HepG2 (cell line): ENCODE measurements at regions of chr5 and their contacts with region 1.

Region 1: DNA sequence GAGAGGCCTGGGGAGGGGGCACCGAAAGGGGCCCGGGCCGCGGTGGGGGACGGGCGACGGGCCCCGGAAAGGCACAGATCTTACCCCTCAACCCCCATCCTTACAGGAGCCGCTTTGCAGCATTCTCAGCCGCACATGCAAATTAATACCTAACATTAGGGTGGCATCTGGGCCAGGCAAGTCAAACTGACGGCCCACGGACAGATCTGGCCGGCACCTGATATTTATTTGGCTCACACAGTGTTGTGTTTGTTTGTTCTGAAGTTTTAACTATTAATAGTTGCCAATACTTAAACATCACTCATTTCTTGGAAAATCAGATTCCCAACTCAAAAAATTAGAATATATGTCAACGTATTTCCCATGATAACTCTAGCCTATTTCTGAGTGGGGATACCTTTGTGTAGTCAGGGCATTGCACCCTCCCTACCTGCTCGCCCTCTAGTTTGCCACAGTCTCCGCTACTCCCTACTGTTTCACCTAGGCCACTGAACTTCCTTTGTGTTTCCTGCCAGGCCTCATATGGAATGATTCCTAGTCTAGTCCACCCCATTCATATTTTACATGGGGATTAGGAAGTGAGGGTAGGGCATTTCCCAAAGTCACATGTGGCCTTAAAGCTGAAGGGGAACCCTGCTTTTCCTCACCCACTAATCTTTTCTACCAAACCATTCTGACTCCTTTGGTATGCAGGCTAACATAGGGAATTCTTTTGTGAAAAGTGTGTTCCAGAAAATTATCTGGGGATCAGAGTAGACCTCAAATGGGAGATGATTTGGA is 71.9 kb upstream of the LARP1 start:
- DNase-seq: no peak
- ATAC-seq: peak; percentile 34; the same call in 2 of the 3 replicates
- H3K4me3 ChIP-seq: peak overlapping the region; percentile 59 to 67 (median 66)
- H3K27ac ChIP-seq: peak overlapping the region; percentile 74
- H3K4me1 ChIP-seq: peaks cover 55% of the 10 kb centered on the region
- H3K27me3 ChIP-seq: no peaks in the 10 kb centered on the region
- CTCF ChIP-seq: no peak
- EP300 ChIP-seq: no peak
- POLR2A ChIP-seq: no peak
- RAD21 ChIP-seq: no peak

Region 2: DNA sequence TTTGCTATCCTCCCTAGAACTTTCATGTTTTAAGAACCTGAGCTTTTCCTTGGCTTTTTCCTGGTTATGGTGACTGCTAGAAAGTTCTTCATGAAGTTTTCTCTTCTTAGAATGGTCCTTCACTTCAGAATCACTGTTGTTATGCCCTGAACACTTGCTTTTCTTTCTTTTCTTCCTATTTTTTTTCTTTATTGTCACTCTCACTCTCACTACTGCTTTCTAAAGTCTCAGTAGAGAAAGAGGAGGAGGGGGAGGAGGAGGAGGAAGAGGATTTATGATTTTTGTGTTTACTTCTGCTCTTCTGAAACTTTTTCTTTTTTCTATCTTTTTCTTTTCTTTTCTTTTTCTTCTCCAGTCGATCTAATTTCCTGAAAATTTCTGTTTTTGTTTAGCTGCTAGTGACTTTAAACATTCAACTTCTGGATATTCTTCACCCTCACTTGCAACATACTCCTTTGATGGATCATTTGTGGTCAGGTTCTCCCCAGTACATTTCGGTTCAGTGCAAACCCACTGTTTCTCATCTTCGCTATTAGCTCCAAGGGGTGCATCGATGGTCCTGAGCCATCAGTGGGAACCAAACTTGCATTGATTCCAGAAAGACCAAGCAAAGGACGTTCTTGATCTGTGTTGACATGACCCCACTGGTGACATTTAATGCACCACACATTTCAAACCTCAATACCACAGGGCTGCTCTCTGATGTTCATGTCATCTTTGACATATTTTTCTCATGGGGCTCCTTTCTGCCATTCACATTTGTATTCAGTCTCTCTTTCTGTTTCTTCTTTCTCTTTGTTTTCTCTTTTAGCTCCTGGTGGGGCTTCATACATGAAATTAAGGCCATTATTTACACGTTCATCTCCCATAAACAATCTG is 123.7 kb before region 1 on chr5:
- CTCF ChIA-PET with region 1: no interaction called
- POLR2A ChIA-PET with region 1: no interaction called
- in situ Hi-C with region 1: no loop called
- intact Hi-C with region 1: no loop called
- DNase-seq: no peak
- ATAC-seq: no peak
- H3K4me3 ChIP-seq: no peak overlapping the region
- H3K27ac ChIP-seq: no peak overlapping the region
- H3K4me1 ChIP-seq: no peaks in the 10 kb centered on the region
- H3K27me3 ChIP-seq: peaks cover 0 to 3% of the 10 kb centered on the region in 2 experiments; a peak in 1 of 5 replicates
- CTCF ChIP-seq: no peak
- EP300 ChIP-seq: no peak
- POLR2A ChIP-seq: no peak
- RAD21 ChIP-seq: no peak

Region 3: DNA sequence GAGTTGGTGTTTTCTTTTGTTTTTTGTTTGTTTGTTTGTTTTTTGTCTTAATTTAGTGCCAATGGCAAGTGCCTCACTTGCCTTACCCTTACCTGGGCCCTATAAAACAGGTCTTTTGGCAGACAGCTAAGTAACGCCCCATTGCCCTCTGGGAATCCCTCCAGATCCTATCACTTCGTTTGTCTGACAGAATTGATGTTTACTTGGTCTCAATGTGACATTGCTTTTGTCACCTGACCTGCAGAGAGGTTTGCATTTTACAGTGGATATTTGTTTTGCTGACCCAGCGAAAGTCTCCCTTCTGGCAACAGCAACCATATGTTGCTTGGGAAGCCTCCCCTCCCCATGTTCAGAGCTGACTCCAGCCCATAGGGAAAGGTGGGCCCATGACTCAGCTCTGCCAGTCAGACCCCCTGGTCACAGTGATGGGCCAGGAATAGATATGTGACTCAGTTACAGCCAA is 17.9 kb after region 1 on chr5:
- CTCF ChIA-PET with region 1: no interaction called
- POLR2A ChIA-PET with region 1: interaction called, 16 read pairs
- in situ Hi-C with region 1: no loop called
- intact Hi-C with region 1: loop called (anchors 1 kb)
- DNase-seq: peak; percentile 83
- ATAC-seq: peak; percentile 66
- H3K4me3 ChIP-seq: peak overlapping the region in 1 of 3 experiments; percentile 51; a peak in 2 of 6 replicates
- H3K27ac ChIP-seq: peak overlapping the region; percentile 58
- H3K4me1 ChIP-seq: peaks cover 82% of the 10 kb centered on the region
- H3K27me3 ChIP-seq: no peaks in the 10 kb centered on the region
- CTCF ChIP-seq: no peak
- EP300 ChIP-seq: peak in 1 of 2 experiments; percentile 9; a peak in 1 of 4 replicates
- POLR2A ChIP-seq: no peak
- RAD21 ChIP-seq: no peak

Region 4: GRCh38 chr5:154723740-154724505 is 40.6 kb after region 1 on chr5:
- CTCF ChIA-PET with region 1: no interaction called
- POLR2A ChIA-PET with region 1: interaction called, 3 read pairs
- in situ Hi-C with region 1: no loop called
- intact Hi-C with region 1: loop called (anchors 2 kb)
- DNase-seq: no peak
- ATAC-seq: peak; percentile 49; the same call in 2 of the 3 replicates
- H3K4me3 ChIP-seq: no peak overlapping the region
- H3K27ac ChIP-seq: no peak overlapping the region
- H3K4me1 ChIP-seq: peaks cover 46% of the 10 kb centered on the region
- H3K27me3 ChIP-seq: no peaks in the 10 kb centered on the region
- CTCF ChIP-seq: 0 out of 2 replicates have a peak, but pooled peaks have one; percentile 16
- EP300 ChIP-seq: no peak
- POLR2A ChIP-seq: no peak
- RAD21 ChIP-seq: no peak

Region 5: GRCh38 chr5:154829181-154829588 is 145.9 kb after region 1 on chr5:
- CTCF ChIA-PET with region 1: no interaction called
- POLR2A ChIA-PET with region 1: no interaction called
- in situ Hi-C with region 1: no loop called
- intact Hi-C with region 1: no loop called
- DNase-seq: no peak
- ATAC-seq: peak; percentile 52
- H3K4me3 ChIP-seq: no peak overlapping the region
- H3K27ac ChIP-seq: peak overlapping the region; percentile 18
- H3K4me1 ChIP-seq: peaks cover 67% of the 10 kb centered on the region
- H3K27me3 ChIP-seq: no peaks in the 10 kb centered on the region
- CTCF ChIP-seq: 0 out of 2 replicates have a peak, but pooled peaks have one; percentile 36
- EP300 ChIP-seq: no peak
- POLR2A ChIP-seq: no peak
- RAD21 ChIP-seq: no peak

Region 6: GRCh38 chr5:155004138-155004744 is 320.9 kb after region 1 on chr5:
- CTCF ChIA-PET with region 1: no interaction called
- POLR2A ChIA-PET with region 1: no interaction called
- in situ Hi-C with region 1: no loop called
- intact Hi-C with region 1: no loop called
- DNase-seq: peak; percentile 30
- ATAC-seq: peak; percentile 92
- H3K4me3 ChIP-seq: no peak overlapping the region
- H3K27ac ChIP-seq: no peak overlapping the region
- H3K4me1 ChIP-seq: peaks cover 28% of the 10 kb centered on the region
- H3K27me3 ChIP-seq: no peaks in the 10 kb centered on the region
- CTCF ChIP-seq: peak; percentile 93
- EP300 ChIP-seq: no peak
- POLR2A ChIP-seq: no peak
- RAD21 ChIP-seq: peak; percentile 65

Region 7: DNA sequence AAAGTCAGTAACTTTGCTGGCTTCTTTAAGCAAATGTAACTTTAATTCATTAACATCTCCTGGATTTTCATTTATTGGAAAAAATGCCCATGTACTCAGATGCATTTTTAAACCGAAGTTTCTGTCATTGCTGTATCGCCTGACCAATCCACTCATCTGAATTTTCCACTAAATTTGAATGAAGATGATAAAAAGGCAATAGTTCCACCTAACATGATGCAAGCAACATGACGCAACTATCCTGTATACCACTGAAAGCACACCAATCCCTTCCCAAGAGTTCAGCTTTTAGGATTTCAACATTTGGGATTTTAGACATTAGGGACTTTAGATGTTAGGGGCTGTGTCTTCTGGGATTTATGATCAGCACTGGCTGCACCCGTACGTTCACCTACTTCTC is 545.8 kb after region 1 on chr5:
- CTCF ChIA-PET with region 1: no interaction called
- POLR2A ChIA-PET with region 1: no interaction called
- in situ Hi-C with region 1: no loop called
- intact Hi-C with region 1: no loop called
- DNase-seq: no peak
- ATAC-seq: no peak
- H3K4me3 ChIP-seq: no peak overlapping the region
- H3K27ac ChIP-seq: no peak overlapping the region
- H3K4me1 ChIP-seq: no peaks in the 10 kb centered on the region
- H3K27me3 ChIP-seq: no peaks in the 10 kb centered on the region
- CTCF ChIP-seq: no peak
- EP300 ChIP-seq: no peak
- POLR2A ChIP-seq: no peak
- RAD21 ChIP-seq: no peak